ENCODE measurements at regions of chr18 and their contacts with region 1.

Region 1: GRCh38 chr18:49555641-49556040 is 6.2 kb upstream of the LIPG start:
- DNase-seq: no peak
- H3K4me3 ChIP-seq: no peak overlapping the region
- H3K27ac ChIP-seq: no peak overlapping the region
- H3K27me3 ChIP-seq: peaks cover 19% of the 10 kb centered on the region
- CTCF ChIP-seq: no peak

Region 2: GRCh38 chr18:49768051-49768391 is 212.4 kb after region 1 on chr18:
- CTCF ChIA-PET with region 1: interaction called, 19 read pairs
- POLR2A ChIA-PET with region 1: no interaction called
- DNase-seq: peak; percentile 43
- H3K4me3 ChIP-seq: no peak overlapping the region
- H3K27ac ChIP-seq: no peak overlapping the region
- H3K27me3 ChIP-seq: no peaks in the 10 kb centered on the region
- CTCF ChIP-seq: peak; percentile 85

Region 3: GRCh38 chr18:49858309-49859020 is 302.8 kb after region 1 on chr18:
- CTCF ChIA-PET with region 1: interaction called, 71 read pairs
- POLR2A ChIA-PET with region 1: no interaction called
- DNase-seq: peak; percentile 38
- H3K4me3 ChIP-seq: no peak overlapping the region
- H3K27ac ChIP-seq: no peak overlapping the region
- H3K27me3 ChIP-seq: peaks cover 16% of the 10 kb centered on the region
- CTCF ChIP-seq: peak; percentile 98

Measured in AG04450 (cell line).